Activated CD8-positive, alpha-beta memory T cell treated with anti-CD3 and anti-CD28 coated beads, Interleukin-2, amount 10 ng/mL, durations not matched to agents 7 days and 5 days (primary cell): ENCODE measurements at regions of chr9 and their contacts with region 1.

Region 1: GRCh38 chr9:130029223-130029973 is 13.6 kb downstream of the FNBP1 start:
- DNase-seq: no peak
- ATAC-seq: peak; percentile 54
- H3K4me3 Mint-ChIP-seq: peak overlapping the region; percentile 61
- H3K27ac Mint-ChIP-seq: peak overlapping the region; percentile 88
- H3K4me1 Mint-ChIP-seq: peaks cover 90% of the 10 kb centered on the region
- H3K27me3 Mint-ChIP-seq: no peaks in the 10 kb centered on the region

Region 2: DNA sequence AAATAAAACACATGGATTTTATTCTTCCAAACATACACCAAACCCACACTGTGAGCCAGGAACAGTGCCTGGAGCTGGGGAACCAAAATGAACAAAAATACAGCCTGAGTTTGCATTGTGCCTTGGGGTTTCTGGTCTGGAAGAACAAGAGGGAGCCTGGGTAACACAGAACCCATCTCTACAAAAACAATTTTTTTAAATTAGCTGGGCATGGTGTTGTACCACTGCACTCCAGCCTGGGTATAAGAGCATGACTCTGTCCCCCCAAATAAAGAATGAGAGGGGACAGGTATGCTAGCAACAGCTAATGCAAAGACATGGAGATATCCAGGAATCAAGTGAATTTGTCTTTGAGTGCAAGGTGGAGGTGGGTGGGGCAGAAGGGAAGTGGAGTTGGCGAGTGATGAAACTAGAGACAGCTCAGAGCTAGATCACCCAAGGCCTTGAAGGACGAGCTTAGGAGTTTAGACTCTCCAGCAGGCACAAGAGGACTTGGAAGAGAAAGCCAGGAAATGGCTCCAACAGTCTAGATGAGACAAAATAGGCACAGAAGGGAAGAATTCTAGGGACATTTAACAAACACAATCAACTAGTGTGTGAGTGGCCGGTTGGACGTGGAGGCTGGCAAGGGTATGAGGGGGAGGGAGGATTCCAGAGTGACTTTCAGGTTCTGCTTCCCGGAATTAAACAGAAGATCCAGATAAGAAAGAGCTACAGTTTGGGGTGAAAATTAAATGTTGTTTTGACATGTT is 33.8 kb before region 1 on chr9:
- CTCF ChIA-PET with region 1: interaction called, 14 read pairs
- DNase-seq: peak; percentile 60
- ATAC-seq: peak; percentile 63
- H3K4me3 Mint-ChIP-seq: peak overlapping the region; percentile 60
- H3K27ac Mint-ChIP-seq: peak overlapping the region; percentile 85
- H3K4me1 Mint-ChIP-seq: peaks cover 77% of the 10 kb centered on the region
- H3K27me3 Mint-ChIP-seq: no peaks in the 10 kb centered on the region

Region 3: GRCh38 chr9:130018260-130018659 is 11.1 kb before region 1 on chr9:
- CTCF ChIA-PET with region 1: interaction called, 13 read pairs
- DNase-seq: no peak
- ATAC-seq: no peak
- H3K4me3 Mint-ChIP-seq: no peak overlapping the region
- H3K27ac Mint-ChIP-seq: peak overlapping the region; percentile 71
- H3K4me1 Mint-ChIP-seq: peaks cover 66% of the 10 kb centered on the region
- H3K27me3 Mint-ChIP-seq: no peaks in the 10 kb centered on the region

Region 4: DNA sequence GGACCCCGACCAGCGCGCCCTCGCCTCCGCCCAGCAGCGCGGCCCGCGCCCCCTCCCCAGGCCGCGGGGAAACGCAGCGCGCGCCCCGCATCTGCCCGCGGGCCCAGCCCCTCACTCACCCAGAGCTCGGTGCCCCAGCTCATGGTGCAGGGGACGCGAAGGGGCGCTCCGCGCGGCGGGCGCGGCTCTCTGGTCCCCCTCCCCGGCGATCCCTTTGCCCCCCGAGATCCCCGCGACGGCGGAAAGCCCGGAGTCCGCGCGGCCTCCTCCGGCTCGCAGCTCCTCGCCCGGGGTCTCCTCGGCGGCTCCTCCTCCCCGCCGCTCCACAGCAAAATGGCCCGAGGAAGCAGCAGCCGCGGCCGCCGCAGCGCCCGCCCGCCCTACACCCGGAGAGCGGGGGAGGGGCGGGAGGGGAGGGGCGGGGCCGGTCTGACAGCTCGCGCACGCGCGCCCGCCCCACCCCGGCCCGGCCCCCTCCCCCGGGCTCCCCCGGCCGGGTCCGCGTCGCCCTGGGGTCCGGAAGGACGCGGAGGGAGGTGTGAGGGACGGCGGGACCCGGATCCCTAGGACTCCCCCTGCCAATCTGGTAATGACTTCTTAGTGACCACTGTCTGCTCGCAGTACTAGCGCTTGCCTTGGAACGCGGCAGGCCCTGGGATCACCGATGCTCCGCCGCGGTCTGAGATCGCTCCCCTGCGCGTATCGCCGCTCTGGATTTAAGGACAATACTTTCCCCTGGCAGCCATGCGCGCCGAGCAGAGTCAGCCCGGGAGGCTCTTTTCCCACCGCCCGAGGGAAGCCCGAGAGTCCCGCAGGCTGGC is 13.6 kb after region 1 on chr9 and contains the start of gene FNBP1:
- CTCF ChIA-PET with region 1: interaction called, 34 read pairs
- DNase-seq: peak; percentile 83
- ATAC-seq: peak; percentile 60
- H3K4me3 Mint-ChIP-seq: peak within 1 kb of the TSS; percentile 98
- H3K27ac Mint-ChIP-seq: peak within 1 kb of the TSS; percentile 97
- H3K4me1 Mint-ChIP-seq: peaks cover 45% of the 10 kb centered on the region
- H3K27me3 Mint-ChIP-seq: no peaks in the 10 kb centered on the region
- total RNA-seq, gene FNBP1: 153 to 167 TPM

Region 5: DNA sequence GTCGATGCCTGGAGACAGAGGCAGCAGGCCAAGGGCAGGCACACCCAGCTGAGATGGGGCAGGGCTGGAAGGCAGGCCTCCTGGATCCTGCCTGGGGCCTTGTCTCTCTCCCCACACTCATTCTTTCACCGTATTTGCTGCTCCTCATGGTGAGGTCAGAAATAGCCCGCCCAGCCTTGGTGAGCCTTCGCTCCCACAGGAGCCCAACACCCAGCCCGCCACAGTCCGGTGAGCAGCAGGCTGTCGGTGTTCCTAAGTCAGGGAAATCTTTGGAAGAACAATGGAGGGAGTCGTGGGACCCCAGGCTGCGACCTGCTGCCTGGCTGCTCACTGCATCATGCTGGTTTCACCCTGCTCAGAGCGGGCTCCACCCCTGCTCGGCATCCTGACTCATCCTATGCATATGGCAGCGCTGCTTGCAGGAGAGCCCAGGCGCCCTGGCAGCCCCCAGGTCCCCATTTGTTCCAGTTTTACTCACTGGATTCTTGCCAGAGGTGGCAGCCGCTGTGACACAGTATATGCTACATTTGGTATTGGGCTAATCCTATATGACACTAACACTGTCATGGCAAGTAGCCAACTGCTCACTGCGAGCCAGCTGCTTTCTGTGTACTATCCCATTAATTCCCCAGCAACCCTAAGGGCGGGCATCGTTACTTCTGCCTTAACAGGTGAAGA is 89.6 kb after region 1 on chr9:
- CTCF ChIA-PET with region 1: no interaction called
- DNase-seq: no peak
- ATAC-seq: peak; percentile 30
- H3K4me3 Mint-ChIP-seq: no peak overlapping the region
- H3K27ac Mint-ChIP-seq: no peak overlapping the region
- H3K4me1 Mint-ChIP-seq: peaks cover 2% of the 10 kb centered on the region
- H3K27me3 Mint-ChIP-seq: no peaks in the 10 kb centered on the region

Region 6: DNA sequence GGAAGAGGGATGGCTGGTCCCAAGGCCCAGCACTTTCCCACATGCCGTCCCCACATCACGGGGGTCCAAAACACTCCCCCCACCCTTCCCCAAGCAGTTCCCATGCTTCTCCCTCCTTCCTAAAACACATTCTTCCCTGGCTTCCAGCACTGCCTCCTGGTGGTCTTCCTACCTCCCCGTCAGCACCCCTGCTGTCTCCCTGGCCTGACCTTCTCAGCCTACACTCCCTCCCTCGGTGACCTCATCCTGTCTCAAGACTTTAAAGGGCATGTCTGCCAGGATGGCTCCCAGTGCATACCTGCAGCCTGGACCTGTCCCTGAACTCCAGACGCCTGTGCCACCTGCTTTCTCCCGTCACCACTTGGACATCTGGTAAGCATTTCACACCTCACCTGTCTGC is 138.5 kb after region 1 on chr9:
- CTCF ChIA-PET with region 1: no interaction called
- DNase-seq: no peak
- ATAC-seq: no peak
- H3K4me3 Mint-ChIP-seq: no peak overlapping the region
- H3K27ac Mint-ChIP-seq: no peak overlapping the region
- H3K4me1 Mint-ChIP-seq: peaks cover 14% of the 10 kb centered on the region
- H3K27me3 Mint-ChIP-seq: peaks cover 16% of the 10 kb centered on the region

Region 7: DNA sequence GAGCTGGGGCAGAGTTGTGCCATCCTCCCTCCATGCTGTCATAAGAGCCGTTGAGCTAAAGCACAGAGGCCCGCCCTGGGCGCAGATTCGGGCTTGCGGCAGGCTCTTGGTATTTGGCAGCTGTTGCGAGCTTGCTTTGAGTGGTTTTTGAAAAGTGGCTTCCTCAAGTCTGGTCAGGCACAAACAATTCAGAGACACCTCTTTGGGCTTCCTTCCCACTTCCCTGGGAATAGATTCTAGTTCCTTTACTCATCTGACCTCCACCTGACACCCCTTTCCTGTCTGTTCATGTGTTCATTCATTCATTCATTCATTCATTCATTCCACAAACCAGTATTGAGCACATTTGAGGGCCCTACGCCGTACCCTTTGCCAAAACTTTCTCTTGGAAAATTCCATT is 170.2 kb after region 1 on chr9:
- CTCF ChIA-PET with region 1: no interaction called
- DNase-seq: no peak
- ATAC-seq: no peak
- H3K4me3 Mint-ChIP-seq: no peak overlapping the region
- H3K27ac Mint-ChIP-seq: no peak overlapping the region
- H3K4me1 Mint-ChIP-seq: no peaks in the 10 kb centered on the region
- H3K27me3 Mint-ChIP-seq: no peaks in the 10 kb centered on the region